ENCODE measurements at regions of chr7 and their contacts with region 1.

Region 1: GRCh38 chr7:150586785-150587152 is 19.6 kb downstream of the GIMAP4 start:
- DNase-seq: no peak

Region 2: DNA sequence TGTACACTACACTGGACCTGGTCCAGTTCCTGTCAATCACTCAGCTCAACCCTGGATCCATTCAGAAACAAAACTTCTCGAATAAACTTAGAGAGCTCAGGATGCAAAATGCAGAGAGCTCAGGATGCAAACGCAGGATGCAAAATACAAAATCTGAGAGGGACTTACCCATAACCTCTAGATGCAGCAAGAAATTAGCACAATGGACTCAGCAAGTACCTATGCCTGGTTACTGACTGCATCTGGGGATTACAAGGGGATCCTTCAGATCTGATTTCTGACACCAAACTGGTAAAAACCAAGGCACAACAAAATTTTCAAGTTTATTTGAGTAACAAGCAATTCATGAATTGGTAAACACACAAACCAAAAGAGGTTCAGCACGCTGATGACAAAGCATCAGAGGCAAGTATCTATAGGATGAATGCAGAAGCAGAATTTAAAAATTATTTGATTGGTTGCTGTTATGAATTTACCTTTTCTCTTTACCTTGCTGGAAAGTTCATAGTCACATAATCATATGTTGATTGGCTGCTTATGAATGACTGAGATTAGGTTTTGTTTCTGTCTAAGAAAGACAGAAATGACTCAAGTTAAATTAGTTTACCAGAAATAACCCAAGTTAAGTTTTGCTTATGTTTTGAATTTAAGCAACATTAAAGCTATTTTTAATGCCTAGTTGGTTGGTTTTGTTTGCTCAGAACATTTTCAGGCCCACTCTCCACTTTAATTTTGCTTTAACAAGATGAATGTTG is 34.0 kb after region 1 on chr7:
- intact Hi-C with region 1: loop called (anchors 1 kb)
- DNase-seq: no peak

Region 3: GRCh38 chr7:150648353-150649079 is 61.7 kb after region 1 on chr7:
- intact Hi-C with region 1: no loop called
- DNase-seq: no peak

Measured in cardiac septum (tissue), 1 donor.